ENCODE measurements at regions of chr11 and their contacts with region 1.

Region 1: DNA sequence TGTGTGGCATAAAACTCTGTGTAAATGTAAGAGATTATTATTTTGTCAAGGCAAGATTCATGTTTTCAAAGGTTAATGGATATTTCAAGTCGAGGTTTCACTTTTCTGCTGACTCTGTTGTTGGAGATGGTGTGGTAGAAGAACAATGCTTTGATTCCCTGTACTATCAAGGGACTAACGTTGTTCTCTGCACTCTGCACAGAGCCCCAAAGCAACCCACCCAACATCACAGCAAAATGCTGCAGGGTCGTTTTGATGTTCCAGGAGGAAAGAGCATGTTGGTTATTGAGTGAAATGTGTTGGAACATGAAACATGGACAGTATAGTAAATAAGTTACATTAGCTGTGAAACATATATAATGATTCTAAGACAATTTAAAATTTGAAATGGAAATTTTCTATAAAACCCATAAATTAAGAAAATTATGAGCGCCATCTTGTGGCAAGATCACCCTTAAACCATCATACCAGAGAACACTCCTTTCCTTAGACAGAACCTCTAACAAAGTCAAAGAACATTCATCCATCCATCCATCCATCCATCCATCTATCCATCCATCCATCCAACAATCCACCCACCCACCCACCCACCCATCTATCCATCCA is 164.4 kb upstream of the ZBED5 start:
- DNase-seq: peak; percentile 29
- H3K4me3 ChIP-seq: no peak overlapping the region
- H3K27ac ChIP-seq: no peak overlapping the region
- H3K4me1 ChIP-seq: peaks cover 19% of the 10 kb centered on the region
- H3K27me3 ChIP-seq: peaks cover 0 to 9% of the 10 kb centered on the region in 2 experiments
- CTCF ChIP-seq: peak; percentile 16 to 26
- POLR2A ChIP-seq: no peak

Region 2: DNA sequence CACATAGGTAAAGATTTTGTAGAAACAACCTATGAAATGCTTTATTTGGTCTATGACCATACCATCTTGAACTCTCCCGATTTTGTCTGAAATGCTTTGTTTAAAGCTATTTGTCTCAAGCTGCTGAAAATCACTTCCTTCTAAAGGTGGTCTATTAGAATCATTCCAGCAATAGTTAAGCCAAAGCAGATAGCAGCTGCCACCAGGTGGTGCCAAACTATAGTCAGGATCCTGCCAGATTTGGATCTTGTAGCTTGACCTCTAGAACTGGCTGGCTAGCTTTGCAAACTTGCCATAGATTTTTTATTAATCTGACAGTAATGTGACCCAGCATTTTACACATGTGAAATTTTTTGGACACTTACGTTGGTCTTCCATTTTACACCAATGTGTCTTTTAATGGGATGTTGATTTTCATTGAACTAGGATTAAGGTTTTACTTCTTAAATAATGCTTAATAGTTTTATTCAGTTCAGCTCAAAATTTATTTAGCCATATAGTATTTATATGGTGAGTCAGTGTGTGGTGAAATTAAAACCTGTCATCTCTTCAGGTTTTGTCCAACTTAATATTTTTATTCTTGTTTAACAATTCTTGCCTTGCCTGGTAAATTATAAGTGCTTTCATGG is 251.5 kb before region 1 on chr11:
- CTCF ChIA-PET with region 1: interaction called, 12 read pairs
- POLR2A ChIA-PET with region 1: no interaction called
- dilution Hi-C with region 1: no loop called
- intact Hi-C with region 1: no loop called
- DNase-seq: peak; percentile 71
- H3K4me3 ChIP-seq: no peak overlapping the region
- H3K27ac ChIP-seq: no peak overlapping the region
- H3K4me1 ChIP-seq: no peaks in the 10 kb centered on the region
- H3K27me3 ChIP-seq: no peaks in the 10 kb centered on the region
- CTCF ChIP-seq: peak; percentile 69 to 75
- POLR2A ChIP-seq: no peak

Region 3: GRCh38 chr11:10857709-10858438 is 164.4 kb before region 1 on chr11 and contains the start of gene ZBED5:
- CTCF ChIA-PET with region 1: interaction called, 3 read pairs
- POLR2A ChIA-PET with region 1: no interaction called
- dilution Hi-C with region 1: no loop called
- intact Hi-C with region 1: loop called (anchors 2 kb)
- DNase-seq: peak; percentile 99
- H3K4me3 ChIP-seq: peak within 1 kb of the TSS; percentile 63 to 100 (median 94)
- H3K27ac ChIP-seq: peak within 1 kb of the TSS; percentile 80
- H3K4me1 ChIP-seq: peaks cover 8% of the 10 kb centered on the region
- H3K27me3 ChIP-seq: no peaks in the 10 kb centered on the region
- CTCF ChIP-seq: peak in 1 of 2 donors; percentile 4
- POLR2A ChIP-seq: peak; percentile 96
- total RNA-seq, gene ZBED5: 35.7 and 41.2 TPM in 2 replicates

Region 4: DNA sequence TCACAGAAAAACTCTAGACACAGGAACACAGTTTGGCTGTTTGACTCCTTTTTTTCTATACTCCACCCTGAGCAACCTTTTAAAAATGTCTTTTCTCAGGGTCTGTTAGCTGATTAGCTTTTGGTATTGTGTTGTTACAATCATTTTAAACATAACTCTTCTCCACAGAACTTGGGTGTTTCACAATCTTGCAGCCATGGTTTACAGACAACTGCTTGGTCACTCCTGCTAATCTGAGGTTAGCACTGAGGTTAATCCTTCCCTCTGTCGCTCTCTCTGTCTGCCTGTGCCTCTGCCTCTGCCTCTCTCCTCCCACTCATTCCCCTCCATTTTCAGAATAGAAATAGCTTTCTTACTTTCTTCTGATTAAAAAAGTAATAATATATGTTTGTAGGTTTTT is 102.0 kb before region 1 on chr11:
- CTCF ChIA-PET with region 1: no interaction called
- POLR2A ChIA-PET with region 1: no interaction called
- dilution Hi-C with region 1: no loop called
- intact Hi-C with region 1: no loop called
- DNase-seq: no peak
- H3K4me3 ChIP-seq: no peak overlapping the region
- H3K27ac ChIP-seq: no peak overlapping the region
- H3K4me1 ChIP-seq: no peaks in the 10 kb centered on the region
- H3K27me3 ChIP-seq: peaks cover 2 to 5% of the 10 kb centered on the region in 2 experiments
- CTCF ChIP-seq: no peak
- POLR2A ChIP-seq: no peak

Region 5: DNA sequence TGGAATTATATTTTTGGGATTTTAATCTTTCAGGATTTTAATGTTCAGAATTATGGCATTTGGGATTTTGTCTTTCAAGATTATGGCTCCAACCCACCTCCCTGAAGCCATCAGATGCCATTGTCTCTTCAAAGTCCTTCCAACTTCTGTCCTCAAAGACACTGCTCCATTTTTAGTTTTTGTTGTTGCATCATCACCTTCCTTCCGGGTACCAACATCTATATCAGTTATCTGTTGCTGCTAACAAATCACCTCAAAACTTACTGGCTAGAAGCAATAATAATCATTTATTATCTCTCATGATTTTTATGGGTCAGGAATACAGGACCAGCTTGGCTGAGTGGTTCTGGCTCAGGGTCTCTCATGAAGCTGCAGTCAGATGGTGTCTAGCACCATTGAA is 25.6 kb before region 1 on chr11:
- CTCF ChIA-PET with region 1: no interaction called
- POLR2A ChIA-PET with region 1: no interaction called
- dilution Hi-C with region 1: no loop called
- intact Hi-C with region 1: no loop called
- DNase-seq: no peak
- H3K4me3 ChIP-seq: no peak overlapping the region
- H3K27ac ChIP-seq: no peak overlapping the region
- H3K4me1 ChIP-seq: no peaks in the 10 kb centered on the region
- H3K27me3 ChIP-seq: peaks cover 6 to 9% of the 10 kb centered on the region in 2 experiments
- CTCF ChIP-seq: no peak
- POLR2A ChIP-seq: no peak

Region 6: DNA sequence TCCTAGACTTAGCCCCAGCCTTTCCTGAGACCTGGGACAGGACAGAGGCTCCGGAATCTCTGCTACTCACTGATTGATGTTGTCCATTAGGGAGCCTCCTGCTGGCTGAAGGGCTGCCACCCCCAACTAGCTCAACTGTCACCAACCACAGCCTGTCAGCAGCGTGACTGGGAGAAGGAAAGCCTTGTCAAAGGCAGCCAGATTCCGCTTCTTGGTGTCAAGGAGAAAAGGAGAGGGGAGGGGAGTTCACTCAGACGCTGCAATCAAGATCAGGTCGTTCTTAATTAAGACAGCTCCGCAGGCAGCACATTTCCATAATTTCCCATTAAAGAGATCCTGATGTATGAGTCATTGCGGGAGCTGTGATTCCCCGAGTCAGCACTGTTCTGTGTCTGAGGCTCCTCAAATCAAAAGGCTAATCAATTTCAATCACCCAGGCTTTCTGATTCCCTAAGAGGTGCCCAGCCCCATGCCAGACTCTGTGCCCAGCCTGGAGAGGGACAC is 11.6 kb before region 1 on chr11:
- CTCF ChIA-PET with region 1: interaction called, 12 read pairs
- POLR2A ChIA-PET with region 1: no interaction called
- dilution Hi-C with region 1: no loop called
- intact Hi-C with region 1: no loop called
- DNase-seq: peak; percentile 23
- H3K4me3 ChIP-seq: no peak overlapping the region
- H3K27ac ChIP-seq: no peak overlapping the region
- H3K4me1 ChIP-seq: no peaks in the 10 kb centered on the region
- H3K27me3 ChIP-seq: peaks cover 15 to 36% of the 10 kb centered on the region in 2 experiments
- CTCF ChIP-seq: peak; percentile 12 to 36
- POLR2A ChIP-seq: no peak

Region 7: GRCh38 chr11:11086061-11086460 is 63.8 kb after region 1 on chr11:
- CTCF ChIA-PET with region 1: no interaction called
- POLR2A ChIA-PET with region 1: no interaction called
- dilution Hi-C with region 1: no loop called
- intact Hi-C with region 1: no loop called
- DNase-seq: no peak
- H3K4me3 ChIP-seq: no peak overlapping the region
- H3K27ac ChIP-seq: no peak overlapping the region
- H3K4me1 ChIP-seq: no peaks in the 10 kb centered on the region
- H3K27me3 ChIP-seq: peaks cover 0 to 3% of the 10 kb centered on the region in 2 experiments
- CTCF ChIP-seq: no peak
- POLR2A ChIP-seq: no peak

Region 8: DNA sequence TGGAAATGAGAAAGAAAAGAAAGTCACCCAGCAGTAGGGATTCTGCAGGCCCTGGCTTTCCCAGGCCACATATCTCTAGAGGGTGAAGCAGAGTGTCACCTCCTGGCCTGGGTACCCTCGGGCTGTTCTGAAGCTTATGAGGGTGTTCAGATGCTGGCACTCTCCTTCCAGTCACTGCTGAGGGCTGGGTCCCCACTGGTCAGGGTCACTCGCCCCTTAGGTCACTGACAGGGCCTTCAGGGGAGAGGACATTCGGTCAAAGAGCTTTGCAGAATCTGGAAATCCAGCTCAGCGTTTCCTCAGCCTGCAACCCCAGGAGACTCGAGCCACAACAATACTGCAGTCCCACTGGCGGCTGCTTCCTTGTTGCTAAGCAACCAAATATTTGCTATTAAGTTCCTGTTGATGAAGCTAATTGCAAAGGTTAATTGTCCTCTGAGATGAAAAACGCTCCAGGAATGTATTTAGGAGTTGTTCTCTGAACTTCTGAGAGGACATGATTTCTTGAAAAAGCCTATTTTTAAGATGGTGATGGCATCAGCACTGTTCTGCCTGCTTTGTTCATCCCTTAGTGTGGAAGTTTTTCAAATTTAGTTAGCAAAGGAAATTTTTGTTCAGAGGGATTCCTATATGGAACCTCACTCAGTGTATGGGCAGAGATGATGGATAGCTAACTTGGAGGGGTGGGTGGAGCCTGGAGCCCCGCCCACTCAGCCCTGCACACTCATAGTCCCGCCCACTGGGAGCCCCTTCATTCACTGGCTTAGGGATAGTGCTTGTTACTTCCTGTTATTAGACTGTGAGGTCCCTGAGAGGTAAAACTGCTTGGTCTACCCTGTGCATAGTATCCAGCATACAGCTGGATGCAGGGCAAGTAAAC is 221.6 kb after region 1 on chr11:
- CTCF ChIA-PET with region 1: no interaction called
- POLR2A ChIA-PET with region 1: no interaction called
- dilution Hi-C with region 1: no loop called
- intact Hi-C with region 1: no loop called
- DNase-seq: peak; percentile 34
- H3K4me3 ChIP-seq: no peak overlapping the region
- H3K27ac ChIP-seq: no peak overlapping the region
- H3K4me1 ChIP-seq: no peaks in the 10 kb centered on the region
- H3K27me3 ChIP-seq: no peaks in the 10 kb centered on the region
- CTCF ChIP-seq: no peak
- POLR2A ChIP-seq: no peak